ENCODE measurements at regions of chr15 and their contacts with region 1.

Region 1: GRCh38 chr15:101578437-101578894 is 73.7 kb downstream of the TM2D3 start:
- DNase-seq: peak in 9 of 10 donors; percentile 49 to 80 (median 61)
- H3K4me3 ChIP-seq: peak overlapping the region in 3 of 59 donors; percentile 3 to 24 (median 4)
- H3K27ac ChIP-seq: peak overlapping the region in 11 of 59 donors; percentile 7 to 64 (median 35)
- H3K27me3 ChIP-seq: peaks cover 0 to 8% (median 0%) of the 10 kb centered on the region in 45 donors
- CTCF ChIP-seq: peak in 55 of 56 donors; percentile 18 to 87 (median 60)

Region 2: GRCh38 chr15:101045236-101045646 is 533.2 kb before region 1 on chr15:
- intact Hi-C with region 1: no loop called
- DNase-seq: peak in 2 of 10 donors; percentile 21 to 30
- H3K4me3 ChIP-seq: no peak overlapping the region
- H3K27ac ChIP-seq: peak overlapping the region in 1 of 59 donors; percentile 5
- H3K27me3 ChIP-seq: no peaks in the 10 kb centered on the region
- CTCF ChIP-seq: no peak

Region 3: DNA sequence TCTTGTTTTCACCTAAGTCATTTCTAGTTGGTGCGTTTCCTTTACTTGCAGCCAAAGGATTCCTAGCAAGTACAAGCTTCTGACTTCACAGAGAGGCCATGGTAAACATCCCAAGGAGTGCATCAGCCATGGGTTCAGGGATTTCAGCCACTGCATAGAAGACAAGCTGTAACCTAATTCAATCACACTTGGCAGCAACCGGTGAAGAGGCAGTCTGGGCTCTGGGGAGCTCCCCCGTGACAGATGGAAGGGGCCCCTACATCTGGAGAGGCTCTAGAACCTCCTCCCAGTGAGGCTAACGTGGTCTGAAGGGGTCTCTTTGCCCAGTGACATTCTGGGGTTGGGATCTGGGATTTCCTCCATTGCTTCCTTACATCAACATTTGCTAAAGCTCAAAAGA is 275.1 kb before region 1 on chr15:
- intact Hi-C with region 1: loop called in 1 of 2 experiments (anchors 5 kb)
- DNase-seq: no peak
- H3K4me3 ChIP-seq: no peak overlapping the region
- H3K27ac ChIP-seq: peak overlapping the region in 1 of 59 donors; percentile 18
- H3K27me3 ChIP-seq: no peaks in the 10 kb centered on the region
- CTCF ChIP-seq: no peak

Region 4: GRCh38 chr15:101501703-101502373 is 76.6 kb before region 1 on chr15:
- intact Hi-C with region 1: loop called in 1 of 2 experiments (anchors 5 kb)
- DNase-seq: peak in 2 of 10 donors; percentile 53
- H3K4me3 ChIP-seq: peak overlapping the region in 21 of 59 donors; percentile 0 to 50 (median 22)
- H3K27ac ChIP-seq: peak overlapping the region in 35 of 59 donors; percentile 9 to 83 (median 59)
- H3K27me3 ChIP-seq: no peaks in the 10 kb centered on the region
- CTCF ChIP-seq: peak in 55 of 56 donors; percentile 15 to 78 (median 59)

Region 5: DNA sequence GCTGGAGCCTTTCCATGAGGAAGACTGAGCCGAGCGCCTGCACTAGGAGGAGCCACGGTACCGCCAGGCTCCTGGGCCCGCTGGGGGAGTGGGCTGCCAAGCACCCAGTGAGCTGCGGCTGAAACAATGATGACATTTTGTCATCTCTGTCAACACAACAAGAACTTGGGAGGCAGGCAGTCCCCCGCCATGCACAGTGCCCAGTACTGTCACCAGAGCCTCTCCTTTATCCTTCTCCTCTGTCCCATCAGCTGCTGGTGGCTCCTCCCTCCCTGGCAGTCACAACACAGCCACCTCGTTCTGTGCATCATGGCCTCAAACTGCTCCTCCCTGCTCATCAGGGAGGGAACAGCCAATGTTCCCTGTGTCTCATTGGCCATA is 54.9 kb before region 1 on chr15:
- intact Hi-C with region 1: loop called in 1 of 2 experiments (anchors 5 kb)
- DNase-seq: peak in 9 of 10 donors; percentile 74 to 95 (median 89)
- H3K4me3 ChIP-seq: no peak overlapping the region
- H3K27ac ChIP-seq: peak overlapping the region in 58 of 59 donors; percentile 79 to 100 (median 95)
- H3K27me3 ChIP-seq: peaks cover 0 to 12% (median 0%) of the 10 kb centered on the region in 45 donors
- CTCF ChIP-seq: peak in 50 of 56 donors; percentile 16 to 75 (median 48)

Measured in dorsolateral prefrontal cortex (tissue), 120 donors.